Caco-2 (cell line): ENCODE measurements at regions of chr12 and their contacts with region 1.

Region 1: GRCh38 chr12:94545935-94546771 is 86.5 kb upstream of the CEP83 start:
- DNase-seq: peak; percentile 40 to 66
- H3K4me3 ChIP-seq: no peak overlapping the region
- H3K4me3 Mint-ChIP-seq: no peak overlapping the region
- H3K27ac Mint-ChIP-seq: no peak overlapping the region
- H3K4me1 ChIP-seq: no peaks in the 10 kb centered on the region
- H3K4me1 Mint-ChIP-seq: no peaks in the 10 kb centered on the region
- H3K27me3 ChIP-seq: no peaks in the 10 kb centered on the region
- H3K27me3 Mint-ChIP-seq: no peaks in the 10 kb centered on the region
- CTCF ChIP-seq: peak; percentile 46 to 75

Region 2: DNA sequence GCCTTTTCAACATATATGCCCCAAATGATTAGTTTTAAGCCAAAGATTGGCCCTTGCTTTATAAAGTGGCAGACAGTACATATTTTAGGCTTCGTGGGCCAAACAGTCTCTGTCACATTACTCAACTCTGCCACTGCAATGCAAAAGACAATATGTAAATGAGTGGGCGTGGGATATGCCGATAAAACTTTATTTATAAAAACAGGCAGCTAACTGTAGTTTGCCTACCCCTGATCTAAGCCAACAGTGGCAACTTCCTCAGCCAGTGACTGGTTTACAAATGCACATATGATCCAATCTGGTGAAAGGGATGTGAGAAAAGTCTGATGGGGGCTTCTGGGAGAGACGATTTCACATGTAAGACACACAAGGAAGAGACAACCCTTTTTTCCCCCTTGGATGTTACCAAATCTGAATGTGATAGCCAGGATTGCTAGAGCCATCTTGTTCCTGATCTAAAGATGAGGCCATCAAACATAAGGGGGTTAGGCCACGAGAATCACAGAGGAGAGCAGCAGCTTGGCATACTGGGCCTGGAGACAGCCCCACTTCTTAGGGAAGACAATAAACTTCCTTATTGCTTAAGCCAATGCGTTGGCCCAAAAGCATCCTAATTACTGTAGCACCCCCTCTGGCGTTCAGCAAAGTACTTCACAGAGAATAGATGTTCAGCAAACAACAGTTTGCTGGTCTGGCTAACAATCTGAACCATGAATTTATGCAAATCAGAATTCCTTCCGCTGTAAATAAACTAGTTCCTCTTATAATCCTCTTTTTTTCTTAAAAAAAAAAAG is 179.4 kb after region 1 on chr12:
- CTCF ChIA-PET with region 1: no interaction called
- POLR2A ChIA-PET with region 1: no interaction called
- intact Hi-C with region 1: loop called (anchors 10 kb)
- DNase-seq: peak; percentile 38 to 44
- H3K4me3 ChIP-seq: no peak overlapping the region
- H3K4me3 Mint-ChIP-seq: no peak overlapping the region
- H3K27ac Mint-ChIP-seq: no peak overlapping the region
- H3K4me1 ChIP-seq: no peaks in the 10 kb centered on the region
- H3K4me1 Mint-ChIP-seq: no peaks in the 10 kb centered on the region
- H3K27me3 ChIP-seq: no peaks in the 10 kb centered on the region
- H3K27me3 Mint-ChIP-seq: peaks cover 4% of the 10 kb centered on the region
- CTCF ChIP-seq: peak in 1 of 2 experiments; percentile 43

Region 3: DNA sequence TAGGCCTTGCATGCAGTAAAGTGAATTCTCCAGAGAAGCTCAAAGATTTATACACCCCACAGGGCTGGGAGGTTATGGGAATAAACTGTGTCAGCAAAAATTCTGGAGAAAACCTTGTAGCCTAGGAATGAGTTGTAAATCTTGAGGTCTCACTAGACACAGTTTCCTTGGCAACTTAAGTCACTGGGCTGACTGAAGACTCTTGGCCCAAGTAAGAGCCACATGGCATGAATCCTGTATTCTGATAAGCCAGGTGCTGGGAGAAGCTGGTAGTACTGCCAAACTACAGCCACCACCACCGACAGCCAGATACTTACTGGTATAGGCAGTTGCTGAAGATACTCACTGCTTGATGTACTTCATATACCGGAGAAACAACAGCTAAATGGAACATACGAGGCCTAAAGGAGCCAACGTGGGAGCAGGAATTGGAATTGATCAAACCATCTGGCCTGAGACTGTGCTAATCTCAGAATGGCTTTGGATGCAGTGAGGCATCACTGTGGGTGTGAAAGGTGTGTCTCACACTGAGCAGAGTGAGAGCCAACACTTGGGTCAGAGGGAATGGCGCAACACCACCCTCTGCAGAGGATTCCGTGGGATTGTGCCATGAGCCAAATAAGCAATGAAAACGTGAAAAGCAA is 207.0 kb after region 1 on chr12:
- CTCF ChIA-PET with region 1: no interaction called
- POLR2A ChIA-PET with region 1: no interaction called
- intact Hi-C with region 1: loop called (anchors 5 kb)
- DNase-seq: no peak
- H3K4me3 ChIP-seq: no peak overlapping the region
- H3K4me3 Mint-ChIP-seq: no peak overlapping the region
- H3K27ac Mint-ChIP-seq: no peak overlapping the region
- H3K4me1 ChIP-seq: peaks cover 6% of the 10 kb centered on the region; the same call in 1 of the 2 replicates
- H3K4me1 Mint-ChIP-seq: peaks cover 21% of the 10 kb centered on the region
- H3K27me3 ChIP-seq: no peaks in the 10 kb centered on the region
- H3K27me3 Mint-ChIP-seq: peaks cover 2% of the 10 kb centered on the region
- CTCF ChIP-seq: peak in 1 of 2 experiments; percentile 2